ENCODE measurements at regions of chr1 and their contacts with region 1.

Region 1: DNA sequence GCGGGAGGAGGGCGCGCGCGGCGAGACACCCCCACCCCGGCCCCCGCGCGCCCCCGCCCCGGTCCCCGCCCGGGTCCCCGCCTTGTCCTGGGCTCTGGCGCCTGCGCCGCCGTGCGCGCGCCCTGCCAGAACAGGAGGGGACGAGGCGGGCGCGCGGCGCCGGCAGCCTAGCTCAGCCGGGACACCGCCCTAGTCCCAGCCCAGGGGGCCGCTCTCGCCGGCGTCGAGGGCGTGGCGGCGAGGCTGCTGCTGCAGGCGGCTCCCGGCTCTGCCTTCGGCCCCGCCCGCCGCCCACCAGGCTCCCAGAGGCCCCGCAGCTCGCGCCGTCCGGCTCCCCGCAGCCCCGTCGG is at the start of gene RCAN3:
- DNase-seq: peak; percentile 94

Region 2: GRCh38 chr1:24415334-24415909 is 87.3 kb before region 1 on chr1 and contains the start of gene NIPAL3:
- CTCF ChIA-PET with region 1: interaction called, 3 read pairs
- POLR2A ChIA-PET with region 1: interaction called, 10 read pairs
- DNase-seq: peak; percentile 97

Region 3: GRCh38 chr1:24491577-24492360 is 10.9 kb before region 1 on chr1:
- CTCF ChIA-PET with region 1: interaction called, 6 read pairs
- POLR2A ChIA-PET with region 1: interaction called, 20 read pairs
- DNase-seq: no peak